ENCODE measurements at regions of chr6 and their contacts with region 1.

Region 1: GRCh38 chr6:169990095-169991030 is 238.9 kb downstream of the ERMARD start:
- DNase-seq: peak; percentile 89
- H3K4me3 Mint-ChIP-seq: peak overlapping the region; percentile 65
- H3K27ac Mint-ChIP-seq: peak overlapping the region; percentile 93
- H3K4me1 Mint-ChIP-seq: peaks cover 37% of the 10 kb centered on the region
- H3K27me3 Mint-ChIP-seq: no peaks in the 10 kb centered on the region

Region 2: GRCh38 chr6:169831450-169832246 is 158.7 kb before region 1 on chr6:
- CTCF ChIA-PET with region 1: interaction called, 8 read pairs
- intact Hi-C with region 1: loop called (anchors 2 kb)
- DNase-seq: peak; percentile 82
- H3K4me3 Mint-ChIP-seq: no peak overlapping the region
- H3K27ac Mint-ChIP-seq: no peak overlapping the region
- H3K4me1 Mint-ChIP-seq: no peaks in the 10 kb centered on the region
- H3K27me3 Mint-ChIP-seq: peaks cover 35% of the 10 kb centered on the region

Region 3: DNA sequence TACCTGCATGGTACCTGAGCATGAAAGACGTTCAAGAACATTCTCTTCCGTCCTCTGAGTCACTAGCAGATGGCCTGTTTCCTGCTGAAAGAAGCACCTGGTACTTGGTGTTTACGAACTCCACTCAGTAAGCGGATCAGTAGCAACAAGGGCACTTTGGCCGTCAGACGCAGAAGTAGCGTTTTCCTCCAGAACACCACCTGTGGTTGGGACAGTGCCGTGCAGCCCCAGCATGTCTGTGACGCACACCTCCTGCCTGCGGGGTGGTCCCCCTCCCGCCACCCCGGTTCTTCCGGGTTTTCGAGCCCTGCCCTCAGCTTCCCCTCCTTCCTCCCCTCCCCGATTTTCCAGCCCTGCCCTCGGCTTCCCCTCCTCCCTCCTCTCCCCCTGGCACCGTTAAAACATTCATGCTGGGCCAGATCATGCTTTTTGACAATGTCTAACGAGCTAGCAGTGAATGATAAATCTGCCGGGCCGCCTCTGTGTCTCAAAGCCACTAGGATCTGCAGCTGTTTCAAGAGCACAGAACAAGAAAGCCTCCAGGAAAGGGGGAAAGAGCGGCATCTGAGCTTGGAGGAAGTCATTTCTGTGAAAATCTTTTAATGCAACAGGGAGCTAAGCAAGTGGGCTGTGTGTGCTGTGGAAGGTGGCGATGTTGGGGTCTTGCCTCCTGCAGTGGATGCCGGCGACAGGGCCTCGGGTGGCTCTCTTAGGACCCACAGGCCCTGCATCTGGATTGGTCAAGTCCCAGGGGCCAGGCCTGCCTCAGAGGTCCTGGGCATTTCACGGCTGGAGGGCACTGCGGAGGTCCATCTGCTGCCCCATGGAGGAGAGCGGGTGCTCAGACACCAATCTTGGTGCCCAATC is 31.0 kb before region 1 on chr6:
- CTCF ChIA-PET with region 1: interaction called, 4 read pairs
- intact Hi-C with region 1: loop called (anchors 1 kb)
- DNase-seq: peak; percentile 79
- H3K4me3 Mint-ChIP-seq: peak overlapping the region; percentile 21
- H3K27ac Mint-ChIP-seq: peak overlapping the region; percentile 68
- H3K4me1 Mint-ChIP-seq: peaks cover 20% of the 10 kb centered on the region
- H3K27me3 Mint-ChIP-seq: peaks cover 5% of the 10 kb centered on the region

Region 4: GRCh38 chr6:169970306-169970988 is 19.9 kb before region 1 on chr6:
- CTCF ChIA-PET with region 1: no interaction called
- intact Hi-C with region 1: no loop called
- DNase-seq: no peak
- H3K4me3 Mint-ChIP-seq: no peak overlapping the region
- H3K27ac Mint-ChIP-seq: no peak overlapping the region
- H3K4me1 Mint-ChIP-seq: no peaks in the 10 kb centered on the region
- H3K27me3 Mint-ChIP-seq: no peaks in the 10 kb centered on the region

Region 5: GRCh38 chr6:170087941-170088581 is 97.7 kb after region 1 on chr6:
- CTCF ChIA-PET with region 1: no interaction called
- intact Hi-C with region 1: loop called (anchors 2 kb)
- DNase-seq: peak; percentile 72
- H3K4me3 Mint-ChIP-seq: peak overlapping the region; percentile 84
- H3K27ac Mint-ChIP-seq: peak overlapping the region; percentile 89
- H3K4me1 Mint-ChIP-seq: peaks cover 28% of the 10 kb centered on the region
- H3K27me3 Mint-ChIP-seq: no peaks in the 10 kb centered on the region

Region 6: DNA sequence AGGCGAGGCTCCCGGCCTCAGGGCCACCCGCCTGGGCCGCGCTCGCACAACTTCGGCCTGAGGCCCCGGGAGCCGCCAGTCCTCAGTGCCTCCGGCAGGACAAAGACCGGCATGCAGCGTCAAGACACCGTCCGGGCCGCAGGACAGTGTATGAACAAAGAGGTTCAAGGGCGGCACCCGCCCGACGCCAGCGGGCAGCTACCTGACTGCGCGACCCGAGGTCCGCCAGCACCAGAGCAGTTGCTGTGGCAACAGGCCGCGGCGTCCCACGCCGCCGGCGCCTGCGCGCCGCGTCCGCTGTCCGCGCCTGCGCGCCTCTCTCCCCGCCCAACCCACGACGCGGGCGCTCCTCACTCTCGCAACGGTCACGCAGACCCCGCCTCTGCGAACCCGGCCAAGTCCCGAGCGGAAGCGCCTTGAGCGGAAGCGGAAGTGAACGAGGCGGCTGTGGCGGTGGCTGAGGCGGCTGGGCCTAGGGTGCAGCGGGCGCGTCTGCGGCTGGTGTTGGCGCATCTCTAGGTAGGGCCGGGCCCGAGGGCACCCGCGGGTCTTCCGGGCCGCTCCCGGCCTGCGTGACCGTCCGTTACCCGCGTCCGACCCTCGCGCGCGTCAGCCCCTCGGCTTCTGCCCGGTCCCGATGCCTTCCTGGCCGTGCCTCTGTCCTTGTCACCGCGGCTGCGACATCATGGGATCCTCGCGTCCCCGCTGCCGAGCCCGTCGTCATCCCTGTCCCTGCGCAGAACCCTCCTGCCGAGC is 316.1 kb after region 1 on chr6 and contains the start of gene FAM120B:
- CTCF ChIA-PET with region 1: no interaction called
- intact Hi-C with region 1: loop called (anchors 5 kb)
- DNase-seq: peak; percentile 92
- H3K4me3 Mint-ChIP-seq: peak within 1 kb of the TSS; percentile 86
- H3K27ac Mint-ChIP-seq: peak within 1 kb of the TSS; percentile 81
- H3K4me1 Mint-ChIP-seq: peaks cover 36% of the 10 kb centered on the region
- H3K27me3 Mint-ChIP-seq: peaks cover 4% of the 10 kb centered on the region
- total RNA-seq, gene FAM120B: 15.5 to 16.1 TPM

Measured in activated naive CD4-positive, alpha-beta T cell treated with anti-CD3 and anti-CD28 coated beads for 36 hours (primary cell).